MCF 10A (cell line): ENCODE measurements at regions of chr1 and their contacts with region 1.

Region 1: GRCh38 chr1:34859446-34860200 is at the start of gene SMIM12:
- DNase-seq: peak; percentile 95
- H3K4me3 Mint-ChIP-seq: peak within 1 kb of the TSS; percentile 93
- H3K27ac Mint-ChIP-seq: peak within 1 kb of the TSS; percentile 79
- H3K4me1 Mint-ChIP-seq: peaks cover 16% of the 10 kb centered on the region
- H3K27me3 Mint-ChIP-seq: peaks cover 9% of the 10 kb centered on the region
- CTCF ChIP-seq: peak; percentile 79
- total RNA-seq, gene SMIM12: 40.2 and 41.4 TPM in 2 replicates

Region 2: DNA sequence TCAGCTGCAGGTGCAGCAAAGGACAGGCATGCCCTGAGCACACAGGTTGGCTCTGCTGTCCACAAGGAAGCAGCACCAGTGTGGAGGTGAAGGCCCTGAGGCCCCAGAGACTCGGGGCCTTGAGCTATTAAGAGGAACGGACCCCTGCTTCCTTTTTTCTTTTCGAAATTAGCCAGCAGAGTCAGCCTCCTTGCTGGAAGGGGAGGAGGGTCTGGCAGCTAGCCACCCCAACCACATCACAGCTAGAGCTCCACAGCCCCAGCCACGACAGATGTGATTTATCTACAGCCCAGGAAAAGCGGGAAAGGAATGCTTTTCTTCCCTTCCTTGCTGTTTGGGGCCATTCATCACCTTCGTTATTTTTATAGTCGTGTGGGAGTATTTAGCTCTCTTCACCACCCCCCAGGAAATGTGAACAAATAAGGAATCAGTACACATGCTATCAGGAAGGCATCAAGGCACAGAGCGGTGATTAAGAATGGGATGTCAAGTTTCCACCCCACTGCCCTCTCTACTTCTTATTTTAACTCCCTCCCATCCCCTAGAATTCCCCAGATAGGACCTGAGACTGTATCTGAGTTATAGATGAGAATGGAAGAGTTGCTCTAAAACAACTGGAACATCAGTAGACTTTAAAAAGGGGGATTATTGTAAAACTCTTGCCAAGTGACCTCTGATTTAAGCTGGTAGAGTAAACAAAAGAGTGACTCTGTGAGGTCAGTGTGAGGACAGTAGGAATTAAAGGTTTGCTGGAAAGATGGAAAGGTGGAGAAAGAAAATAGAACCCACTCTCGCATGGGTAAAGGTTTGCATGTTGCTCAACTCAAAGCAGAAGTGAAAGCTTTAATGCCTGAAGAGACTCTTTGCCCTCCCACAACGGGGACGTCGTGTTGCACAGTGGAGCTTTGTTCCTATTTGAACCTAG is 329.4 kb before region 1 on chr1:
- CTCF ChIA-PET with region 1: no interaction called
- POLR2A ChIA-PET with region 1: no interaction called
- intact Hi-C with region 1: no loop called
- DNase-seq: no peak
- H3K4me3 Mint-ChIP-seq: no peak overlapping the region
- H3K27ac Mint-ChIP-seq: no peak overlapping the region
- H3K4me1 Mint-ChIP-seq: no peaks in the 10 kb centered on the region
- H3K27me3 Mint-ChIP-seq: no peaks in the 10 kb centered on the region
- CTCF ChIP-seq: no peak

Region 3: GRCh38 chr1:34754964-34755637 is 104.5 kb before region 1 on chr1 and contains the start of gene GJB5:
- CTCF ChIA-PET with region 1: interaction called, 13 read pairs
- POLR2A ChIA-PET with region 1: interaction called, 21 read pairs
- intact Hi-C with region 1: no loop called
- DNase-seq: peak; percentile 94
- H3K4me3 Mint-ChIP-seq: peak within 1 kb of the TSS; percentile 93
- H3K27ac Mint-ChIP-seq: peak within 1 kb of the TSS; percentile 96
- H3K4me1 Mint-ChIP-seq: peaks cover 16% of the 10 kb centered on the region
- H3K27me3 Mint-ChIP-seq: no peaks in the 10 kb centered on the region
- CTCF ChIP-seq: no peak
- total RNA-seq, gene GJB5: 26.5 and 33.2 TPM in 2 replicates